GM12878 (cell line): ENCODE measurements at regions of chr3 and their contacts with region 1.

Region 1: GRCh38 chr3:120596116-120596852 is at the start of gene NDUFB4:
- DNase-seq: peak; percentile 98
- ATAC-seq: peak; percentile 96
- H3K4me3 ChIP-seq: peak within 1 kb of the TSS; percentile 98
- H3K27ac ChIP-seq: peak within 1 kb of the TSS; percentile 97
- H3K4me1 ChIP-seq: no peaks in the 10 kb centered on the region; the same call in 1 of the 2 replicates
- H3K27me3 ChIP-seq: no peaks in the 10 kb centered on the region
- CTCF ChIP-seq: no peak
- EP300 ChIP-seq: no peak
- POLR2A ChIP-seq: peak; percentile 90
- RAD21 ChIP-seq: no peak
- polyA plus RNA-seq, gene NDUFB4: 732 to 864 TPM

Region 2: DNA sequence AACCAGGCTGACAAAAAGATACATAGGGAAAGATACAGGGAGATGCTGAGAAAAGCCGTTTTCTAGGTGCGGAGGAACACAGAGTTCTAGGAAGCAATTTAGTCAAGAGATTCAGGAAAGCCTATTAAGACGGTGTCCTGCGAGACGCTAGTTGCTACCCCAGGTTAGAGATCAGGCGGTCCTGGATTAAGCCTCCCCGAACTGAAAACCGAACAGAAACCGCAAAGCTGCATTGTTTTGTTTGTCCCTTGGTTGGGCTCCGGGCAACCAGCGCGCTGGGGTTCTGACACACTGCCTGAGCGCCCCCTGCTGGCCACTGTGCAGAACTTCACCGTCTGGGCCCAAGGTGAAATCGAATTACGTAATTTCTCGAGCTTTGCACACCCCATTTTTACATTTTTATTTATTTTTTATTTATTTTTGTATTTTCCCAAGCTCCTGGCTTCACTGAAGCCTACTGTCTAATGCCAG is 37.5 kb before region 1 on chr3:
- CTCF ChIA-PET with region 1: interaction called, 15 read pairs
- POLR2A ChIA-PET with region 1: no interaction called
- RAD21 ChIA-PET with region 1: interaction called, 7 read pairs
- SMC1A ChIA-PET with region 1: interaction called, 5 read pairs
- in situ Hi-C with region 1: no loop called
- intact Hi-C with region 1: no loop called
- DNase-seq: peak; percentile 33
- ATAC-seq: peak; percentile 93
- H3K4me3 ChIP-seq: peak overlapping the region; percentile 55; the same call in 1 of the 2 replicates
- H3K27ac ChIP-seq: no peak overlapping the region
- H3K4me1 ChIP-seq: peaks cover 3% of the 10 kb centered on the region; the same call in 1 of the 2 replicates
- H3K27me3 ChIP-seq: no peaks in the 10 kb centered on the region
- CTCF ChIP-seq: peak; percentile 88 to 95 (median 95)
- EP300 ChIP-seq: peak in 1 of 2 experiments; percentile 43; a peak in 1 of 4 replicates
- POLR2A ChIP-seq: no peak
- RAD21 ChIP-seq: peak; percentile 84

Region 3: DNA sequence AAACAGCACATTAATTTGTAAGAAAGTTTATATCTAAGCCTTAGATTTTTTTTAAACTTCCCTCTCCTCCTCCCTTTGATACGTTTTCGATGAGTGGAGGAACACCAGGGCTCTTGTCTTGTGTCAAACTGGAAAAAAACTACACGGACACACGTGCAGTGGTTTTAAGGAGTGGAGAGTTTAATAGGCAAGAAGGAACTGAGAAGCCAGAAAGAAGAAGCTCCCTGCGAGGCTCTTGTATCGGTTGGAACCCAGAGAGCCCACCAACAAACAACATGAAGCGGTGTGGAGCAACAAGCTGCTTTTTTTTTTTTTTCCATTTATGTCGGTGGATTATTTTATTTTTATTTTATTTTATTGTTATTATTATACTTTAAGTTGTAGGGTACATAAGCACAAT is 18.5 kb after region 1 on chr3:
- CTCF ChIA-PET with region 1: interaction called, 3 read pairs
- POLR2A ChIA-PET with region 1: interaction called, 6 read pairs
- RAD21 ChIA-PET with region 1: interaction called, 4 read pairs
- SMC1A ChIA-PET with region 1: interaction called, 20 read pairs
- in situ Hi-C with region 1: no loop called
- intact Hi-C with region 1: no loop called
- DNase-seq: no peak
- ATAC-seq: no peak
- H3K4me3 ChIP-seq: no peak overlapping the region
- H3K27ac ChIP-seq: no peak overlapping the region
- H3K4me1 ChIP-seq: no peaks in the 10 kb centered on the region
- H3K27me3 ChIP-seq: no peaks in the 10 kb centered on the region
- CTCF ChIP-seq: no peak
- EP300 ChIP-seq: no peak
- POLR2A ChIP-seq: no peak
- RAD21 ChIP-seq: no peak

Region 4: GRCh38 chr3:120688121-120688520 is 91.8 kb after region 1 on chr3:
- CTCF ChIA-PET with region 1: interaction called, 4 read pairs
- POLR2A ChIA-PET with region 1: interaction called, 3 read pairs
- RAD21 ChIA-PET with region 1: interaction called, 6 read pairs
- SMC1A ChIA-PET with region 1: interaction called, 7 read pairs
- in situ Hi-C with region 1: no loop called
- intact Hi-C with region 1: loop called (anchors 5 kb)
- DNase-seq: peak; percentile 55
- ATAC-seq: peak; percentile 96
- H3K4me3 ChIP-seq: 0 out of 2 replicates have a peak overlapping the region, but pooled peaks have one; percentile 30
- H3K27ac ChIP-seq: peak overlapping the region; percentile 75
- H3K4me1 ChIP-seq: peaks cover 7% of the 10 kb centered on the region; the same call in 1 of the 2 replicates
- H3K27me3 ChIP-seq: no peaks in the 10 kb centered on the region
- CTCF ChIP-seq: no peak
- EP300 ChIP-seq: 0 out of 4 replicates have a peak, but pooled peaks of 1 of the 2 experiments have one; percentile 41
- POLR2A ChIP-seq: no peak
- RAD21 ChIP-seq: no peak

Region 5: GRCh38 chr3:120763601-120764000 is 167.3 kb after region 1 on chr3:
- CTCF ChIA-PET with region 1: interaction called, 4 read pairs
- POLR2A ChIA-PET with region 1: interaction called, 5 read pairs
- RAD21 ChIA-PET with region 1: interaction called, 10 read pairs
- SMC1A ChIA-PET with region 1: interaction called, 15 read pairs
- in situ Hi-C with region 1: no loop called
- intact Hi-C with region 1: no loop called
- DNase-seq: no peak
- ATAC-seq: peak; percentile 92
- H3K4me3 ChIP-seq: peak overlapping the region; percentile 31; the same call in 1 of the 2 replicates
- H3K27ac ChIP-seq: peak overlapping the region; percentile 65
- H3K4me1 ChIP-seq: peaks cover 18% of the 10 kb centered on the region
- H3K27me3 ChIP-seq: no peaks in the 10 kb centered on the region
- CTCF ChIP-seq: no peak
- EP300 ChIP-seq: no peak
- POLR2A ChIP-seq: no peak
- RAD21 ChIP-seq: no peak